ENCODE measurements at regions of chr20 and their contacts with region 1.

Region 1: GRCh38 chr20:46681032-46681854 is 8.0 kb downstream of the TP53RK start:
- DNase-seq: peak; percentile 63 to 86 (median 77)
- H3K4me3 ChIP-seq: no peak overlapping the region
- H3K27ac ChIP-seq: no peak overlapping the region
- H3K4me1 ChIP-seq: peaks cover 0 to 26% (median 17%) of the 10 kb centered on the region in 4 experiments
- H3K27me3 ChIP-seq: no peaks in the 10 kb centered on the region

Region 2: DNA sequence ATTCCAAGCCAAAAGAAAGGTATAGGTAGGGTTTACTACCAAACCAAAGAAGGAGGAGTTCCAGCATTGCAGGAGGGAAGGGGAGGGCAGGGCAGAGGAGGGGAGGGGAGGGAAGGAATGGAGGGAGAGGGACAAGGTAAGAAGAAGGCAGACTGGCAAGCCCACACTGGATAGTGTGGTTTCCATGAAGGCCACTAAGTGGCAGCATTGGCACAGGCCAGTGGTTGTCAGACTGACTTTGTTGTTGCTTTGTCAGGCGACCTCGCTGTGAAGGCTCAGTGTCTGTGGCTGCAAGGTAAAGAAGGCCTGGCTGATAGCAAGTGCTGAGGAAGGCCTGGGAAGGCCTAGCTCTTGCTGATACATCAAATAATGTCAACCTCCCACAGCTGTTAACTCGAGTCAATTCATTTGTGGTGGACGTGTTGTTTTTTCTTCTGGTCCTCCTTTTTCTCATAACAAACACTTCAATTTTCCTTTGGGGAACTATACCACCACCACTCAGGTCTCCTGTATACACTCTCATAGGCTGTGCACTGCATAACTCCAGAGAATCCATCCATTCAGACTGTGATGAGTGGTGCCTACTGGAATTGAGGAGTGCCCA is 160.2 kb before region 1 on chr20:
- CTCF ChIA-PET with region 1: interaction called, 29 read pairs
- POLR2A ChIA-PET with region 1: no interaction called
- DNase-seq: peak; percentile 58 to 81 (median 78)
- H3K4me3 ChIP-seq: no peak overlapping the region
- H3K27ac ChIP-seq: no peak overlapping the region
- H3K4me1 ChIP-seq: no peaks in the 10 kb centered on the region
- H3K27me3 ChIP-seq: peaks cover 0 to 1% (median 0%) of the 10 kb centered on the region in 5 experiments

Region 3: DNA sequence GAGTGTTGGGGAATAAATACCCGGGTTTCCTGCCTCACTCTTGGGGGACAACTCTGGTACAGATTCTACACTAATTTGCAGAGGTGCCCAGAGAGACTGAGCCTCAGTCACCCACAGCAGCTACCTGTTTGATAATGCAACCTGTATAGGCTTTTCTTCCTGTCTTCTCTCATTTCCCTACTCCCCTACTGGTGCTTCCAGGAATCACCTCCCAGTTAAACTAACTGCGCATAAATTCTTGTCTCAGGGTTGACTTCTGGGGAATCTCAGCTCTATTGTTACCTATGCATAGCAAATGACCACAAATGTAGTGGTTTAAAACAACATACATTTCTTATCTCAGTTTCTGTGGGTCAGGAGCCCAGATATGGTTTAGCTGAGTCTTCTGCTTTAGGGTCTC is 142.1 kb before region 1 on chr20:
- CTCF ChIA-PET with region 1: interaction called, 15 read pairs
- POLR2A ChIA-PET with region 1: no interaction called
- DNase-seq: no peak
- H3K4me3 ChIP-seq: no peak overlapping the region
- H3K27ac ChIP-seq: no peak overlapping the region
- H3K4me1 ChIP-seq: no peaks in the 10 kb centered on the region
- H3K27me3 ChIP-seq: peaks cover 0 to 10% (median 2%) of the 10 kb centered on the region in 5 experiments

Region 4: DNA sequence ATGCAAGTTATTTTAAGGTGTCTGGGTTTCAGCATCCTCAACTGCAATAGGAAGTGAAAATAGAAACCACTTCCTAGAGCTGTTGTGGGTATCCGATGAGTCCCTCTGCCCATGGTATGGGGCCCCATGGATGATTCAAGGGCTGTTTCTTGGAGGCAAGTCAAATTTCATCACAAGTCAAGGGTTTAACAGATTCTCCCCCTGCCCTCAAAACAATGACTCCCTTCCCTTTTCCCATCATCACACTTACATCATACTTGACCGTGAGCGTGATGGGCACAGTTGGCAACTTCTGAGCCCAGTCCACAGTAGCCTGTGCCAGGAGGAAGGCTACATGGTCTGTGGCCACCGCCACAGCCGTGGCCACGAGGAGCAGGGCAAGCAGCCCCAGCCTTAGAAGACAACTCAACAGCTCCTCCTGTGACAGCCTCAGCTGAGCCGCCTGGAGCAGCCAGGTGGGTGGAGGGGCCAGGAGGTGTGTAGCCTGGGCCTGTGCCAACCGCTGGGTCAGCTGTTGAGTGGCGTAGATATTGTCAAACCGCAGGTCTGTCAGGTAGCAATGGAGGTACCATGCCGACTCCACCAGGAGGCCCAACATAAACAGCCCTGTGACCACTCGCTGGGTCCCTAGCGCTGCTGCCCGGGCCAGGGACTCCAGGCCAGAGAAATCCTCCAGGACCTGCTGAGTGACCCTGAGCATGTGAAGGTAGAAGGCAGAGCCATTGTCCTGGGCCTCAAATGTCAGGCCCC is 136.0 kb before region 1 on chr20:
- CTCF ChIA-PET with region 1: interaction called, 15 read pairs
- POLR2A ChIA-PET with region 1: no interaction called
- DNase-seq: peak; percentile 71 to 90 (median 90)
- H3K4me3 ChIP-seq: peak overlapping the region in 1 of 7 experiments; percentile 32
- H3K27ac ChIP-seq: no peak overlapping the region
- H3K4me1 ChIP-seq: peaks cover 6 to 36% (median 33%) of the 10 kb centered on the region in 4 experiments
- H3K27me3 ChIP-seq: peaks cover 0 to 10% (median 0%) of the 10 kb centered on the region in 5 experiments

Region 5: DNA sequence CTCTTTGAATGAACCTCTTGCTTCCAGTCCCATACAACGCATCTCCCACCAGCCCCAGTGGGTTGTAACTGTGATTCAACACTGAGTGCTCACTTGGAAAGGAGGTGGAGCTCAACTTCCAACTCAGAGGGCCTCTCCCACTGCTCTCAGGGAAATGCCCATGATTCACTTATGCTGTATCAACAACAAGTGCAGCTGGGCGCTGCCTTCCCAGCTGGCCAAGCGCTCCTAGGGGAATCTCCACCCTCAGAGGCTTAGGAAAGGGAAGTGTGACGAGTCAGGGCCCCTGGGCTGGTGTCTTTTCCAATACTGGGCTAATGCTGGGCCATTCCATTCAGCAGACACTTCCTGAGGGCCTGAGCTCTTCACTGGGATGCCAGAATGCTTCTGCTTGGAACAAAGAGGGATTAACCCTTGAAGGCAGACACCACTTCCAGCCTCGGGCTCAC is 122.7 kb before region 1 on chr20:
- CTCF ChIA-PET with region 1: interaction called, 10 read pairs
- POLR2A ChIA-PET with region 1: no interaction called
- DNase-seq: no peak
- H3K4me3 ChIP-seq: no peak overlapping the region
- H3K27ac ChIP-seq: no peak overlapping the region
- H3K4me1 ChIP-seq: peaks cover 0 to 16% (median 11%) of the 10 kb centered on the region in 4 experiments
- H3K27me3 ChIP-seq: peaks cover 0 to 3% (median 0%) of the 10 kb centered on the region in 5 experiments

Measured in common myeloid progenitor, CD34-positive (primary cell).